Heart right ventricle (tissue), 16 donors: ENCODE measurements at regions of chr4 and their contacts with region 1.

Region 1: DNA sequence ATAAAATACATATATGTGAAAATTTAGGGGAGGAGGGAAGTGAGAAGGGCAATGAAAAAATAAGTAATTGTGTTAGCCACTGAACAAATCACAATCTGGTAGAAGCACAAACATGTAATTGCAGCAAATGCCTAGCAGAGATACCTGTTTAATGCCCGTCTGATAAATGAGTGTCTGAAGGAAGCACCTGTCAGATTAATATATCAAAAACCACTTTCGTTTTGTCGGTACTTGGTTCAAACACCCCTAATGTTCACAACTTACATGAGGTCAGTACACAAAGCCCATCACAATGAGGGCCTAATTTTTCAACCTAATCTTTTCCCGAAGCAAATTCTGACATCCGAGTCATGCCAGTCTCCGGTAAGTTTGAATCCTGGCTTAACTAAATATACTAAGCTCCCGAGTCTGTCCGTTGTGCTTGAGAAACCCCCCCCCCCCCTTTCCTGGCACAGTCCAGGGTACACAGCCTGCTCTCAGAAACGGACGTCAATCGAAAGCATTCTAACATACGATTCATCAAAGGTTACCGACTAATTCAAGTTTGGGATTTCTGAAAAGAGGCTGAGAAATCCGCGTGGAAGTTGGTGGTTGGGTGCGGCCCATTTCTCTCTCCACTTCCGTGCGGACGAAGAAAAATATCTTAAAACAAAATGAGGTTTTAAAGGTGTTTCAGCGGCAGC is 758 bp downstream of the SDAD1 start:
- DNase-seq: no peak
- ATAC-seq: peak in 5 of 8 donors; percentile 2 to 46 (median 26)
- H3K4me3 ChIP-seq: peak overlapping the region; percentile 53 to 98 (median 77)
- H3K27ac ChIP-seq: peak overlapping the region in 9 of 10 donors; percentile 45 to 89 (median 78)
- H3K4me1 ChIP-seq: peaks cover 0 to 30% (median 21%) of the 10 kb centered on the region in 9 donors
- H3K27me3 ChIP-seq: no peaks in the 10 kb centered on the region
- CTCF ChIP-seq: no peak

Region 2: DNA sequence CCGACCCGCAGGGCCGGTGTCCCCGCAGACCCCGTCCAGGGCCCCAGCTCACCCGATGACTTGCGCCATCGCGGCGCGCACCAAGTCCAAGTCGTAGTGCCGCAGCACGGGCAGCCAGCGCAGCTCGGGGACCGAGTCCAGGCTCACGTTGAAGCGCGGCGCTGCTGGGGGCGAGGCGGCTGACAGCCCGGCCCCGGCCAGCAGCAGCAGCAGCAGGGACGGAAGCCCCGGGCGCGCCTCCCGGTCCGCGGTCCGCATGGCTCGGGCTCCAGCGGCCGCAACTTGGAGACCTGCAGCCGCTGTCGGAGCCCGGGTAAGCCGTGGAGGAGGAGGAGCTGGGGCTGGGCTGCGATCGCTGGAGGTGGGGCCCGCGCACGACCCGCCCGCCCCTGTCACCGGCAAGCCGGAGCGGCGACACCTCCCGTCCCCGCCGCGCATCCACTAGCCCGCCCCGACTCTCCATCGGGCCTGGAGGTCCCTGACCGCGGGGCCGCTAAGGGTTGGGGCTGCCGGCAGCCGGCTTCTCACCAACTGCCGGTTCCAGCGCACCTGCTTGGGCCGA is 49.2 kb before region 1 on chr4 and contains the start of gene NAAA:
- intact Hi-C with region 1: no loop called
- DNase-seq: peak; percentile 82 to 86
- ATAC-seq: peak; percentile 78 to 97 (median 92)
- H3K4me3 ChIP-seq: peak within 1 kb of the TSS; percentile 70 to 98 (median 76)
- H3K27ac ChIP-seq: peak within 1 kb of the TSS; percentile 46 to 92 (median 76)
- H3K4me1 ChIP-seq: peaks cover 0 to 17% (median 10%) of the 10 kb centered on the region in 9 donors
- H3K27me3 ChIP-seq: no peaks in the 10 kb centered on the region
- CTCF ChIP-seq: peak in 6 of 9 donors; percentile 13 to 69 (median 49)
- total RNA-seq, gene NAAA: 6.4 to 27.4 (median 14.5) TPM

Region 3: DNA sequence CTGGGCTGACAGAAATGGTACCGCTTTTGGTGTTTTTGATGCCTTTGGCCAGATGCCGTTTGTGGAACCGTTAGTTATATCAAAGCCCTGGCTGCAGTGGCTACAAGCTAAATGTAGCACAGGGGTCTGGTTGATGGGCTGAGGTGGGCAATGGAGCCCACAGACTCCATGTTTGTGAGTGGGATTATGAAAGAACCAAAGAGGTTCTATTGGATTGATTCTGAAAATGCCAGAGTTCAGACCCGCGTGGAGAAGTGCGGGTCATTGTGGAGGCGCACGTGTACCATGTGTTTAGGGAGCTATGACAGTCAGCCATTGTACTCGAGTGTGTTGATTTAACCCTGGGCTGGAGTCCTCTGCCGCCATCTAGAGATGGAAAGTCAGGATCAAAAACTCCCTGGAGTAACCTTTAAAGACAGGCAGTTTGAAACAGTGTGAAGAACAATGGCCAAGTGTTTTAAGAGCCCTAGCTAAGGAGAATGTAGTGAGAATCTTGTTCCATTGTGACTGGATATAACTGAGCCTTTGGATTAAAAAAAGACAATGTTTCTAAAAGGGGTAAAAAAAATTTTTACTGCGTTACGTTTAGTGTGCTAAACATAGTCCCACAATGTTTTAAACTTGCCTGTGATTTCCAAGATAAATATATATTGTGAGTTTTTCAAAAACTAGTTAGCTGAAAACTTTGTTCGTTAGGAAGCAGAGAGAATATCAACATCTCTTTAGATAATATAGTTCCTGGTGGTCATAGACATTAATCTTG is 97.2 kb after region 1 on chr4:
- intact Hi-C with region 1: loop called in 4 of 10 experiments (anchors 5 kb)
- DNase-seq: peak in 1 of 2 donors; percentile 57
- ATAC-seq: peak; percentile 75 to 90 (median 89)
- H3K4me3 ChIP-seq: peak overlapping the region in 5 of 10 donors; percentile 2 to 38 (median 26)
- H3K27ac ChIP-seq: peak overlapping the region in 2 of 10 donors; percentile 25 to 52
- H3K4me1 ChIP-seq: peaks cover 0 to 61% (median 19%) of the 10 kb centered on the region in 9 donors
- H3K27me3 ChIP-seq: no peaks in the 10 kb centered on the region
- CTCF ChIP-seq: peak; percentile 24 to 70 (median 57)

Region 4: GRCh38 chr4:76148142-76148865 is 158.3 kb after region 1 on chr4 and contains the start of gene NUP54:
- intact Hi-C with region 1: loop called in 1 of 10 experiments (anchors 5 kb)
- DNase-seq: peak; percentile 93
- ATAC-seq: peak; percentile 99 to 100 (median 99)
- H3K4me3 ChIP-seq: peak within 1 kb of the TSS; percentile 75 to 98 (median 89)
- H3K27ac ChIP-seq: peak within 1 kb of the TSS in 9 of 10 donors; percentile 83 to 97 (median 90)
- H3K4me1 ChIP-seq: peaks cover 5 to 37% (median 29%) of the 10 kb centered on the region in 9 donors
- H3K27me3 ChIP-seq: no peaks in the 10 kb centered on the region
- CTCF ChIP-seq: no peak
- total RNA-seq, gene NUP54: 16.1 to 22.6 (median 18.9) TPM

Region 5: DNA sequence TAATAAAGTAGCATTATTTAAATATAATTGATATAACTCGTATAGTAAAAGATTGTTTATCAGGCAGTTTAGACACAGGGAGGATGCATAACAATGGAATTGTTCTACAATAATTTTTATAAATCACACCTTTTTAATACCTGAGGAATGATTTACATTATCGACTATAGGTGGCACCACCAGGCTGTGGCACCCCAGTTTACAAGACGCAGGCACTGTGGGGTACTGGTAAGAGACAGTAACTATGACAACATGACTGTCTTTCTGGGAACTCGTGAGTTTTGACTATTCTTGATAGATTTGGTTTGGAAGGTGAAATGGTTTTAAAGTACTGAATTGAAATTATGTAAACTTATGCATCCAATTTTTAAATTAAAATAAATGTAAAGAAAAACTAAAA is 289.5 kb after region 1 on chr4:
- intact Hi-C with region 1: no loop called
- DNase-seq: no peak
- ATAC-seq: no peak
- H3K4me3 ChIP-seq: no peak overlapping the region
- H3K27ac ChIP-seq: no peak overlapping the region
- H3K4me1 ChIP-seq: peaks cover 0 to 10% (median 2%) of the 10 kb centered on the region in 9 donors
- H3K27me3 ChIP-seq: no peaks in the 10 kb centered on the region
- CTCF ChIP-seq: peak in 2 of 9 donors; percentile 10